PC-3 (cell line): ENCODE measurements at regions of chr13 and their contacts with region 1.

Region 1: DNA sequence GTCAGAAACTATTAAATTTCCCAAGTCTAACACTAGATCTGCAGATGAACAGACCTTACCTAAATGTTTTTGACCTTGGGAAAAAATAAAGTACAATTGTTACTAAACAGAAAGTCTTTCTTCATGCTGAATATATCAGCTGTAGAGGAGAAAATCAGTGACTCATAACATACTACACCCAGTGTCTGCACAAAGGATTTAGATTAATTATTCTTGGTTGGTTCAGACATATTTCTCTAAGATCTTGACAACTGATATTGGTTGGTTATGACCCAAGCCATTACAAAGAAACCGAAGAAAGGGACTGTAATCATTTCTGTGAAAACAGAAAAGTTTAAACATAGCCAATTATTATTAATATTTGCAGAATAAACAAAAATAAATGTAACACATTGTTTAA is 225.1 kb downstream of the HS6ST3 start:
- DNase-seq: no peak
- ATAC-seq: no peak
- H3K4me3 ChIP-seq: no peak overlapping the region
- H3K27ac ChIP-seq: no peak overlapping the region
- H3K4me1 ChIP-seq: no peaks in the 10 kb centered on the region
- H3K27me3 ChIP-seq: no peaks in the 10 kb centered on the region
- CTCF ChIP-seq: no peak

Region 2: GRCh38 chr13:96130818-96131340 is 184.1 kb before region 1 on chr13:
- CTCF ChIA-PET with region 1: no interaction called
- POLR2A ChIA-PET with region 1: no interaction called
- intact Hi-C with region 1: no loop called
- DNase-seq: no peak
- ATAC-seq: no peak
- H3K4me3 ChIP-seq: no peak overlapping the region
- H3K27ac ChIP-seq: no peak overlapping the region
- H3K4me1 ChIP-seq: no peaks in the 10 kb centered on the region
- H3K27me3 ChIP-seq: no peaks in the 10 kb centered on the region; the same call in 1 of the 2 replicates
- CTCF ChIP-seq: no peak

Region 3: DNA sequence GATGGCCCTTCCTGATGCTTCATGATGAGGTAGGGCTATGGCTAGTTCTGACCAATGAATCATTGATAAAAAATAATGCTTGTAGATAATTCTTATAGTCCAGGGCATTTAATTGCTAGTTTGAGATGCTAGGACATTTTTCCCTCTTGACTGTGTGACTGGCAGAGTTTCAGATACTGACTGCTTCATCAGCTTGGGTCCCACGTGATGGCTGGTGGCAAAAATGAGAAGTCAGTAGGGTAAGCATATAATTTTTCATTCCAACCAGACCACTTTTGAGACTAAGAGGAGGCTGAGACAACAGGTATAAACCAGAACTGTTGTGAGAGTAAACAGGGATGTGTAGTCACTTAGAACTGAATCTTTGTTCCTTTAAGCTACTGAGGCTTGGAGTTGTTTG is 41.8 kb before region 1 on chr13:
- CTCF ChIA-PET with region 1: no interaction called
- POLR2A ChIA-PET with region 1: no interaction called
- intact Hi-C with region 1: loop called (anchors 10 kb)
- DNase-seq: no peak
- ATAC-seq: no peak
- H3K4me3 ChIP-seq: no peak overlapping the region
- H3K27ac ChIP-seq: no peak overlapping the region
- H3K4me1 ChIP-seq: no peaks in the 10 kb centered on the region
- H3K27me3 ChIP-seq: no peaks in the 10 kb centered on the region
- CTCF ChIP-seq: no peak

Region 4: GRCh38 chr13:96403241-96403640 is 88.3 kb after region 1 on chr13:
- CTCF ChIA-PET with region 1: no interaction called
- POLR2A ChIA-PET with region 1: no interaction called
- intact Hi-C with region 1: no loop called
- DNase-seq: no peak
- ATAC-seq: no peak
- H3K4me3 ChIP-seq: no peak overlapping the region
- H3K27ac ChIP-seq: no peak overlapping the region
- H3K4me1 ChIP-seq: no peaks in the 10 kb centered on the region
- H3K27me3 ChIP-seq: no peaks in the 10 kb centered on the region
- CTCF ChIP-seq: no peak